Sigmoid colon (tissue), 7 donors: ENCODE measurements at regions of chr10 and their contacts with region 1.

Region 1: DNA sequence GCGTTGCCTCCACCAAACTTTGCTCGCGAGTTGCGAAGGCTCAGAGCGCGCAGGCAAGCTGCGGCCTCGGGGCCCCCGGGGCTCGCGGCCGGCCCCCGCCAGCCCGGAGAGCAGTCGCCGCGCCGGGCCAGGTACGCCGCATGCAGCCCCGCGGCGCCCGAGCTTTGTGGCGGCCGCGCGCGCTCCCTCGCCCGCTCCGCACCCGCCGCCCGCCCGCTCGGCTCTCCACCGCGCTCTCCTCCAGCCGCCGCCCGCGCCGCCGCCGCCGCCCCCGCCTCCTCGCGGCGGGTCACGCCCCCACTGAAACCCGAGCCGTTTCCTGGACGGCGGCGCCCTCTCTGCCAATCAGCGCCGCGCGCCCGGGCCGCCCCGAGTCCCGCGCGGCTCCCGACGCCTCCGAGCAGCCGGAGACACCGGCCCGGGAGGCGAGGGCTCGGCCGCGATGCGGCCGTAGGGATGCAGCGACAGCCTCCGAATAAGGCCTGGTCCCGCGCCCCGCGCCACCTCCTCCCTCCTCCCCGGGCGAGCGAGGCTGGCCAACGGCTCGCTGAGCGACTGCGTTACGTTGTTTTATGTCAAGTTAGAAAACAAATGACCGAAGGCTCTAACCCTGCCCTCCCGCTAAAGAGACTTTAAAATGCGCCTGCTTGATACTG is at the start of gene FGFR2:
- DNase-seq: peak; percentile 92
- H3K4me3 ChIP-seq: peak within 1 kb of the TSS; percentile 80 to 90 (median 82)
- H3K27ac ChIP-seq: peak within 1 kb of the TSS; percentile 84 to 96 (median 89)
- H3K4me1 ChIP-seq: peaks cover 0 to 39% (median 20%) of the 10 kb centered on the region in 4 donors
- H3K27me3 ChIP-seq: no peaks in the 10 kb centered on the region
- CTCF ChIP-seq: no peak
- EP300 ChIP-seq: no peak
- POLR2A ChIP-seq: peak in 1 of 2 donors; percentile 34
- total RNA-seq, gene FGFR2: 71.5 to 143 (median 112) TPM

Region 2: DNA sequence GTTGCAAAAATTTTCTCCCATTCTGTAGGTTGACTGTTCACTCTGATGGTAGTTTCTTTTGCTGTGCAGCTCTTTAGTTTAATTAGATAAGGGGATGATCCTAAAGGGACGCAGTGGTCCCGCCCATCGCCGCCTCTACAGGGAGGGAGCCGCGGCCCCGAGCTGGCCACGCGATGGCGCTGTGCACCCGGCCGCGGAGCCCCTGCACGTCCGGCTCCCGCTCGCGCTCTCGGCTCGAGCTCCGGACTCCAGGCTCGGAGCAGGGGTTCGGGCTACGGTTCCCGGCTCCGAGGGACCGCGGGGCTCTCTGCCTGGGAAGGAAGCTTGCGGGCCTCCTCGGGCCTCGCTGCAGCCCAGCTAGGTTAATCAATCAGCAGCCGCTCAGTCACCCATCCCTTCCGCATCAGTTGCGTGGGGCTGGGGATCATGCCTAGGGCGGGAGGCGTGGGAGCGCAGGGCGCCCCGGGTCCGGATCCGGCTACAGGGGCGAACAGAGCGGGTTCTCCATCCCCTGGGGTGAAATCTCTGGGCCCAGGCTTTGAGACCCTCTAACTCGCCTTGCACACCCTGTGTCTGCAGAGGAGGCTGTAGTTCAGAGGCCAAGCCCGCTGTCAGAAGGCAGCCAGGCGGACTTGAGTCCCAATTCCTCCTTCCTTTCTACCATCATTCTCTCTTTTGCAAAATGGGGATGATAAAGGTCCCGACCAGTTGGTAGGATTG is 649.3 kb before region 1 on chr10:
- intact Hi-C with region 1: loop called (anchors 5 kb)
- DNase-seq: peak; percentile 82
- H3K4me3 ChIP-seq: peak overlapping the region; percentile 12 to 50 (median 38)
- H3K27ac ChIP-seq: peak overlapping the region in 1 of 4 donors; percentile 45
- H3K4me1 ChIP-seq: peaks cover 0 to 27% (median 23%) of the 10 kb centered on the region in 4 donors
- H3K27me3 ChIP-seq: peaks cover 0 to 12% (median 0%) of the 10 kb centered on the region in 3 donors
- CTCF ChIP-seq: peak; percentile 70 to 96 (median 83)
- EP300 ChIP-seq: no peak
- POLR2A ChIP-seq: no peak

Region 3: GRCh38 chr10:121033366-121033765 is 565.0 kb before region 1 on chr10:
- intact Hi-C with region 1: loop called (anchors 2 kb)
- DNase-seq: no peak
- H3K4me3 ChIP-seq: no peak overlapping the region
- H3K27ac ChIP-seq: peak overlapping the region in 3 of 4 donors; percentile 54 to 81 (median 80)
- H3K4me1 ChIP-seq: peaks cover 0 to 49% (median 36%) of the 10 kb centered on the region in 4 donors
- H3K27me3 ChIP-seq: no peaks in the 10 kb centered on the region
- CTCF ChIP-seq: no peak
- EP300 ChIP-seq: peak; percentile 67 to 91 (median 86)
- POLR2A ChIP-seq: no peak

Region 4: GRCh38 chr10:121138112-121138860 is 460.0 kb before region 1 on chr10:
- intact Hi-C with region 1: loop called (anchors 5 kb)
- DNase-seq: no peak
- H3K4me3 ChIP-seq: no peak overlapping the region
- H3K27ac ChIP-seq: peak overlapping the region in 3 of 4 donors; percentile 75 to 81 (median 79)
- H3K4me1 ChIP-seq: peaks cover 3 to 49% (median 35%) of the 10 kb centered on the region in 4 donors
- H3K27me3 ChIP-seq: no peaks in the 10 kb centered on the region
- CTCF ChIP-seq: no peak
- EP300 ChIP-seq: peak in 2 of 4 donors; percentile 15 to 80
- POLR2A ChIP-seq: no peak

Region 5: GRCh38 chr10:121437596-121437995 is 160.7 kb before region 1 on chr10:
- intact Hi-C with region 1: loop called (anchors 5 kb)
- DNase-seq: peak; percentile 87
- H3K4me3 ChIP-seq: no peak overlapping the region
- H3K27ac ChIP-seq: peak overlapping the region; percentile 17 to 73 (median 64)
- H3K4me1 ChIP-seq: peaks cover 0 to 43% (median 29%) of the 10 kb centered on the region in 4 donors
- H3K27me3 ChIP-seq: no peaks in the 10 kb centered on the region
- CTCF ChIP-seq: no peak
- EP300 ChIP-seq: no peak
- POLR2A ChIP-seq: no peak

Region 6: DNA sequence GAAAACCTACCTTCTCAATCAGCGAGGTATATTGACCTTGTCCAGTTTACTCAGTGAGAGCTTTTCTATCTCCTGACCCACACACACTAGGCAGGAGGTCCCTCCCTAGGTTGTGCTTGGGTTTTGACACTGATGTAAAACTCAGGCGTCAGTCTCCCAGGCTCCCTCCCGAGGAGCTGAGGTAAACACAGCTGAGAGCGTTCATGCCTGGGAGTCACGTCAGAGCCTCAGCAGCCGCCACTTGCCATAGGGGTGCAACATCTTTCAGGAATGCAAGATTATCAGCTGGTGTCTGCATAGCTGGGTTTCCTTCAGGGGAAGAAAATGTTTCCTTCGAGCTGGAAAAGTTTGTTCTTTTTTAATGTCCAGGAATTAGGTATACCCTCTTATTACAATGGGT is 70.7 kb before region 1 on chr10:
- intact Hi-C with region 1: loop called (anchors 2 kb)
- DNase-seq: peak; percentile 83
- H3K4me3 ChIP-seq: no peak overlapping the region
- H3K27ac ChIP-seq: peak overlapping the region; percentile 61 to 89 (median 79)
- H3K4me1 ChIP-seq: peaks cover 0 to 81% (median 59%) of the 10 kb centered on the region in 4 donors
- H3K27me3 ChIP-seq: no peaks in the 10 kb centered on the region
- CTCF ChIP-seq: no peak
- EP300 ChIP-seq: no peak
- POLR2A ChIP-seq: no peak